Caco-2 (cell line): ENCODE measurements at regions of chr4 and their contacts with region 1.

Region 1: DNA sequence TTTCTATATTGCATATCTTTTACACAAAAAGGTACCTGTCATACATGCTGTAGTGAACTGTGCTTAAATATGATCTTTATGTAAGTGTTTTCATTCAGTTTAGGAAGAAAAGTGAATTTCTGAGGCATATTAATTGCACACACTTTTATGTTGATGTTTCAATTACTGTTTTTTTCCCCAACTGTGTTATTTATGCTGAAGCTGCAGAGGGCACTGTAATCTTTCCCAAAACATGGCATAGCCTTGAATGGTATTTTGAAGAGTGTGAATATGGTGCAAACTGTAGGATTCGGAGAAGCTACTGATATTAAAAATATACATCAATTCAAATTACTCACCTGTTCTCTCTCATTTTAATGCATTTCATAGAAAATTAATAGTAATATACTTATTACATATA is 6.0 kb upstream of the CENPE start:
- DNase-seq: no peak
- H3K4me3 ChIP-seq: no peak overlapping the region
- H3K4me3 Mint-ChIP-seq: no peak overlapping the region
- H3K27ac Mint-ChIP-seq: no peak overlapping the region
- H3K4me1 ChIP-seq: peaks cover 10% of the 10 kb centered on the region; the same call in 1 of the 2 replicates
- H3K4me1 Mint-ChIP-seq: peaks cover 23% of the 10 kb centered on the region
- H3K27me3 ChIP-seq: no peaks in the 10 kb centered on the region
- H3K27me3 Mint-ChIP-seq: no peaks in the 10 kb centered on the region
- CTCF ChIP-seq: peak; percentile 37 to 40

Region 2: DNA sequence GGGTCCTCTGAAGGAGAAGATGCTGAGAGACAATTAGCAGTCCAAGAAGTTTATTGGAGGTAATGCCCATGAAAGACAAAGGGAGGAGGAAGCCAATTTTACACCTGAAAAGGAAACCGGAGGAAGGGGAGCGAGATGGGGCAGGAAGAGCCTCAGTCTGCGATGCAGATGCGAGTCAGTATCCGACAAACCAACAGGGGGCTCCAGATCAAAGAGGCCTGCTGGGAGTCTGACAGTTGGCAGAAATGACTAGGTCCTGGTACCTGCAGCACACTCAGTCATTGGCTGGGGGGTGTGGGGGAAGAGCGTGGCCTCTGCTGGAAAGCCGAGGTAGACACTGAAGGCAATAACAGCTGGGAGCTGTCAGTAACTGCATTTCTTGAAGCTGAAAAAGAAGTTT is 225.2 kb after region 1 on chr4:
- CTCF ChIA-PET with region 1: no interaction called
- POLR2A ChIA-PET with region 1: no interaction called
- intact Hi-C with region 1: loop called (anchors 10 kb)
- DNase-seq: peak in 1 of 2 experiments; percentile 11
- H3K4me3 ChIP-seq: no peak overlapping the region
- H3K4me3 Mint-ChIP-seq: no peak overlapping the region
- H3K27ac Mint-ChIP-seq: no peak overlapping the region
- H3K4me1 ChIP-seq: peaks cover 22% of the 10 kb centered on the region
- H3K4me1 Mint-ChIP-seq: peaks cover 11% of the 10 kb centered on the region
- H3K27me3 ChIP-seq: no peaks in the 10 kb centered on the region
- H3K27me3 Mint-ChIP-seq: no peaks in the 10 kb centered on the region
- CTCF ChIP-seq: no peak

Region 3: DNA sequence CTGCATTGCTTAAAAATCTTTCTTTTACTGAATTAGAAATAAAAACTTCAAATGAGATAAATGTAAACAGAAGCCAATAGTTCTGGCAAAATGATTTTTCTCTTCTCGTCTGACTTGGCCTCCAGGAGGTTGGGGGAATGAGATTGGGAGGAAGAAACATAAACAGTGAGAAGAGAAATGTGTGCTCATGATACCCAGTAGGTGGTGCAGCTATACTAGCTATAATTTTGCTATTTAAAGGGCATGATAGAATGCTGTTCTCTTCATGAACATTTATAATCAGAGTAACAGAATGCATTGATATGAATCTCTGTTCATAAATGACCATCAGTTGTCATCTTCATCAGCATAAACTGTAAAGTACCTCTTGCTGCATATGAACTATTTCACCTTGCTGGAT is 430.1 kb after region 1 on chr4:
- CTCF ChIA-PET with region 1: no interaction called
- POLR2A ChIA-PET with region 1: no interaction called
- intact Hi-C with region 1: loop called (anchors 5 kb)
- DNase-seq: no peak
- H3K4me3 ChIP-seq: no peak overlapping the region
- H3K4me3 Mint-ChIP-seq: no peak overlapping the region
- H3K27ac Mint-ChIP-seq: no peak overlapping the region
- H3K4me1 ChIP-seq: no peaks in the 10 kb centered on the region
- H3K4me1 Mint-ChIP-seq: no peaks in the 10 kb centered on the region
- H3K27me3 ChIP-seq: no peaks in the 10 kb centered on the region
- H3K27me3 Mint-ChIP-seq: no peaks in the 10 kb centered on the region
- CTCF ChIP-seq: peak in 1 of 2 experiments; percentile 15

Region 4: GRCh38 chr4:103786014-103786413 is 581.9 kb after region 1 on chr4:
- CTCF ChIA-PET with region 1: no interaction called
- POLR2A ChIA-PET with region 1: no interaction called
- intact Hi-C with region 1: loop called (anchors 1 kb)
- DNase-seq: peak; percentile 36 to 52
- H3K4me3 ChIP-seq: no peak overlapping the region
- H3K4me3 Mint-ChIP-seq: no peak overlapping the region
- H3K27ac Mint-ChIP-seq: no peak overlapping the region
- H3K4me1 ChIP-seq: no peaks in the 10 kb centered on the region
- H3K4me1 Mint-ChIP-seq: no peaks in the 10 kb centered on the region
- H3K27me3 ChIP-seq: no peaks in the 10 kb centered on the region
- H3K27me3 Mint-ChIP-seq: no peaks in the 10 kb centered on the region
- CTCF ChIP-seq: peak; percentile 46 to 59

Region 5: GRCh38 chr4:103934178-103934789 is 730.2 kb after region 1 on chr4:
- CTCF ChIA-PET with region 1: no interaction called
- POLR2A ChIA-PET with region 1: no interaction called
- intact Hi-C with region 1: loop called (anchors 2 kb)
- DNase-seq: peak in 1 of 2 experiments; percentile 34
- H3K4me3 ChIP-seq: no peak overlapping the region
- H3K4me3 Mint-ChIP-seq: no peak overlapping the region
- H3K27ac Mint-ChIP-seq: no peak overlapping the region
- H3K4me1 ChIP-seq: no peaks in the 10 kb centered on the region
- H3K4me1 Mint-ChIP-seq: no peaks in the 10 kb centered on the region
- H3K27me3 ChIP-seq: no peaks in the 10 kb centered on the region
- H3K27me3 Mint-ChIP-seq: no peaks in the 10 kb centered on the region
- CTCF ChIP-seq: peak; percentile 62 to 66